Activated CD4-positive, alpha-beta T cell treated with anti-CD3 and anti-CD28 coated beads, Interleukin-2, amount 10 ng/mL, durations not matched to agents 7 days and 5 days (primary cell): ENCODE measurements at regions of chr7 and their contacts with region 1.

Region 1: DNA sequence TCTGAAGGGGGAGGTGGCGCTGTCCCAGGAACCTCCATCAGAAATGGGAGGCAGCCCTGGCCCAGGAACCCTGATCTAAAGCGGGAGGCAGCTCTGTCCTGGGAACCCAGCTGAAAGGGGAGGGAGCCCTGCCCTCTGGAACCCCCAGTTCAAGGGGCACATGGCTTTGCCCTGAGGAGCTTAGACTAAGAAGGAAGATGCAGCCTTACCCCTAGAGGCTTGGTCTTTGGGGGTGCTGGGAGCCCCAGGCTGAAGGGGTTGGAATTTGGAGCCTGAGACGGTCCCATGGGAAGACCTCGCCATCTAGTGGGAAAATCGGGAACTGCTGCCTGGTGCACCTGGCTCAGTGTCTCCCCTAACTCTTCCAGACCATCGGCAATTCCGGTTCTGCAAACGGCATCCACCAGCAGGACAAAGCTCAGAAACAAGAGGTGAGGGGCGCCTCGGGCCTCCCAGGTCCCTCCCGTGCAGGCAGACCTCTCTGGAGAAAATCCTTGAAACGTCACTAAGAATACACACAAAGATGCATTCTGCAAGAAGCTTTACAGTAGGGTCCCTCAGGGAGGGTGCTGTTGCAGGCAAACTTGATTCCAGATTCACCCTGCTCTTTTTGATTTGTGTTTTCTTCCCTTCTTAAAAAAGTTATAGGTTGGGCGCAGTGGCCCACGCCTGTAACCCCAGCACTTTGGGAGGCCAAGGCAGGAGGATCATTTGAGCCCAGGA is 52.4 kb upstream of the GTF2IRD1 start:
- DNase-seq: peak; percentile 73
- H3K4me3 Mint-ChIP-seq: no peak overlapping the region
- H3K27ac Mint-ChIP-seq: no peak overlapping the region
- H3K4me1 Mint-ChIP-seq: no peaks in the 10 kb centered on the region
- H3K27me3 Mint-ChIP-seq: no peaks in the 10 kb centered on the region

Region 2: GRCh38 chr7:74068393-74069085 is 332.8 kb before region 1 on chr7:
- CTCF ChIA-PET with region 1: interaction called, 18 read pairs
- POLR2A ChIA-PET with region 1: no interaction called
- DNase-seq: no peak
- H3K4me3 Mint-ChIP-seq: no peak overlapping the region
- H3K27ac Mint-ChIP-seq: no peak overlapping the region
- H3K4me1 Mint-ChIP-seq: no peaks in the 10 kb centered on the region
- H3K27me3 Mint-ChIP-seq: no peaks in the 10 kb centered on the region

Region 3: DNA sequence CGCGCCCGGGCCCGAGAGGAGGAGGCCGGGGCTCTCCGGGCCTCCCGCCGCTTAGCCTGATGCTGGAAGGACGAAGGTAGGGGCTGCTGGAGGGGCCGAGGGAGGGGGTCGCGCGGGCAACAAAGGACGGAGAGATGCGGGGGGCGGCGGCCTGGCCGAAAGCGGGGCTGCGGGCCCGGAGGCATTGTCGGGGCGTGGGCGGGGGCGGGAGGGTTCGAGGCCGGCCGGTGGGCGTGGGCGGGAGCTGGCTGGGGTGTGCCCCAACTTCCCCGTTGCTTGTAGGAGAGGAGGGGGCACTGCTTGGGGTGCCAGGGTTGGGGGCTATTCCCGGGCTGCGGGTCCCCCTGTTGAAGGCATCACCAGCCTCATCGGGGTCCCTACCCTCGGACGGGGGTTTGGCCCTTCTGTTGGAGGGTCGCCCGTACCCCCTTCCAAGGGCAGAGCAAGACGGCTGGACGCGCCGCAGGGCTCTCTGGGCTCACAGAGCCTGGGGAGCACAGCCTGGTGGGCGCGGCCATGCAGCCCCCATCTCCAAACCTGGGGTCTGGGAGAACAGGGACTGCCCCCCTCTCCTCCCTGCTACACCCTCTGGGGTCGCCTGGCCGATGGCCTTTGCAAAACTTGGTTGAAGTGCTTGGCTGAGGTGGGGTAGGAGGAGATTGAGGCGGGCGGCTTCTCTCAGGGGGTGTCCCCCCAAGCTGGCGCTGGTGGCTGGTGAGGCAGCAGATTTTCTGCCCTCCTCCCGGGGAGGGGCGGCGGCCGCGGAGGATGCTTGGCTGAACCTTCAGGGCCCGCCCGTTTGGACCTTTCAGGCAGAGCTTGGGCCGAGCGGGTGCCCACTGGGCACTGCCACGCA is 111.4 kb before region 1 on chr7:
- CTCF ChIA-PET with region 1: no interaction called
- POLR2A ChIA-PET with region 1: no interaction called
- DNase-seq: no peak
- H3K4me3 Mint-ChIP-seq: no peak overlapping the region
- H3K27ac Mint-ChIP-seq: no peak overlapping the region
- H3K4me1 Mint-ChIP-seq: peaks cover 21% of the 10 kb centered on the region
- H3K27me3 Mint-ChIP-seq: peaks cover 28% of the 10 kb centered on the region

Region 4: DNA sequence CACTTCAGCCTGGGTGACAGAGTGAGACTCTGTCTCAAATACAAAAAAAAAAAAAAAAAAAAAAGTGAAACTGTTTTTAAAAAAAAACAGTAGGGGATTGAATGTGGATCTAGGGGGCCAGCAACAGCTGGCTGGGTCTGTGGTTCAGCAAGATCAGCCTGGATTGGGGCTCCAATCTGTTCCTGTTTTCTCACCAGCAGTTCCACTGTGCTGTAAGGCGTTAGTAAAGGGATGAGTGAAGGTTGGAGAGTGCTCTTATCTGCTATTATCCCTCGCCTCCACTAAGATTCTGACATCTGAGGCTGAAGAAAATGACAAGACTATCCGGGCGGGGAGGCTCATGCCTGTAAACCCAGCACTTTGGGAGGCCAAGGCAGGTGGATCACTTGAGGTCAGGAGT is 10.8 kb after region 1 on chr7:
- CTCF ChIA-PET with region 1: interaction called, 11 read pairs
- POLR2A ChIA-PET with region 1: no interaction called
- DNase-seq: no peak
- H3K4me3 Mint-ChIP-seq: no peak overlapping the region
- H3K27ac Mint-ChIP-seq: no peak overlapping the region
- H3K4me1 Mint-ChIP-seq: no peaks in the 10 kb centered on the region
- H3K27me3 Mint-ChIP-seq: no peaks in the 10 kb centered on the region